H1 (cell line): ENCODE measurements at regions of chr16 and their contacts with region 1.

Region 1: GRCh38 chr16:24499193-24499814 is 40.1 kb upstream of the RBBP6 start:
- DNase-seq: peak; percentile 44 to 77
- H3K4me3 ChIP-seq: no peak overlapping the region
- H3K27ac ChIP-seq: no peak overlapping the region
- H3K4me1 ChIP-seq: peaks cover 0 to 5% (median 4%) of the 10 kb centered on the region in 4 experiments; a peak in 6 of 7 replicates
- H3K27me3 ChIP-seq: no peaks in the 10 kb centered on the region; a peak in 1 of 7 replicates
- CTCF ChIP-seq: peak; percentile 69 to 92 (median 92)
- EP300 ChIP-seq: no peak
- POLR2A ChIP-seq: no peak
- RAD21 ChIP-seq: peak; percentile 98 to 99

Region 2: DNA sequence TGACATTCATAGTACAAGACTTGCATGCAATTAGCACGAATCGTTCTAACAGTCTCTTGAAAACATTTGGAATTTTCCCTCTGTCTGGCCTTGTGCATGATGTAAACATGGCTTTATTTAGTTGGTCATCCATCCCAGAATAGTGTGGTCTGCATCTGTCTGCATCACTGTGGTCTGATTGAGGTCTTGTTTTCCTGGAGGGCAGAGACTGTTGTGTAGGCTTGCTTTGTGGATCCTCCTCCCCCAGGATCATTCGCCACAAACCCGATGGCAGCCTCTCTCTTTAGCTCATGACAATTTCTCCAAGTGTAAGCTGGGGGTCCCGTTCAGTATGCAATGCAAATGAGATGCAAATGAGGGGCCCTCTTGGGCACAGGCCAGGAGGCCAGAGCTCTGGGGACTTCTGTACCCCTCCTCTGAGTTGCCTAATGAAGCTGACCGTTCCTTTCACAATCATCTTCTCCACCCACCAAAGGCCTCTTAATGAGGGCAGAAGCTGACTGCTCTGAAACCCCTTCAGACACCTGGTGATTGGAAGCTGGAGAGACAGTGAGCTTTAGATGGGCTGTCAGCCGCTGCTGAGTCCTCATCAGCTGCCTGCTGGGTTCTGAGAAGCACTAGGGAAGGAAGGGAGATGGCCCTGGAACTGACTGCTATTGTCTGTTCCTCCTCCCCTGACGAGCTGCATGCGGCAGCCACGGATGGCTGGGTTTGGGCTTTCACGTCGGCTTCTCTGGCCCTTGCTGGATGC is 444.4 kb before region 1 on chr16:
- CTCF ChIA-PET with region 1: interaction called, 16 read pairs
- POLR2A ChIA-PET with region 1: no interaction called
- DNase-seq: peak in 1 of 2 experiments; percentile 56
- H3K4me3 ChIP-seq: peak overlapping the region in 1 of 4 experiments; percentile 16; a peak in 2 of 8 replicates
- H3K27ac ChIP-seq: peak overlapping the region; percentile 3; the same call in 1 of the 2 replicates
- H3K4me1 ChIP-seq: peaks cover 5 to 30% (median 12%) of the 10 kb centered on the region in 4 experiments
- H3K27me3 ChIP-seq: no peaks in the 10 kb centered on the region
- CTCF ChIP-seq: no peak
- EP300 ChIP-seq: no peak
- POLR2A ChIP-seq: no peak
- RAD21 ChIP-seq: peak in 1 of 2 experiments; percentile 9; a peak in 1 of 4 replicates

Region 3: GRCh38 chr16:24318670-24319069 is 180.6 kb before region 1 on chr16:
- CTCF ChIA-PET with region 1: interaction called, 12 read pairs
- POLR2A ChIA-PET with region 1: no interaction called
- DNase-seq: peak; percentile 15 to 60
- H3K4me3 ChIP-seq: no peak overlapping the region
- H3K27ac ChIP-seq: no peak overlapping the region
- H3K4me1 ChIP-seq: peaks cover 0 to 10% (median 3%) of the 10 kb centered on the region in 4 experiments; a peak in 3 of 7 replicates
- H3K27me3 ChIP-seq: no peaks in the 10 kb centered on the region
- CTCF ChIP-seq: peak; percentile 67 to 85 (median 75)
- EP300 ChIP-seq: no peak
- POLR2A ChIP-seq: no peak
- RAD21 ChIP-seq: peak; percentile 75 to 81

Region 4: GRCh38 chr16:24336998-24337397 is 162.3 kb before region 1 on chr16:
- CTCF ChIA-PET with region 1: interaction called, 10 read pairs
- POLR2A ChIA-PET with region 1: no interaction called
- DNase-seq: no peak
- H3K4me3 ChIP-seq: no peak overlapping the region
- H3K27ac ChIP-seq: no peak overlapping the region
- H3K4me1 ChIP-seq: no peaks in the 10 kb centered on the region
- H3K27me3 ChIP-seq: no peaks in the 10 kb centered on the region
- CTCF ChIP-seq: peak in 2 of 3 experiments; percentile 17 to 26; a peak in 2 of 4 replicates
- EP300 ChIP-seq: no peak
- POLR2A ChIP-seq: no peak
- RAD21 ChIP-seq: peak; percentile 40 to 60; a peak in 3 of 4 replicates

Region 5: GRCh38 chr16:24482681-24483202 is 16.6 kb before region 1 on chr16:
- CTCF ChIA-PET with region 1: interaction called, 11 read pairs
- POLR2A ChIA-PET with region 1: no interaction called
- DNase-seq: peak in 1 of 2 experiments; percentile 29
- H3K4me3 ChIP-seq: no peak overlapping the region; a peak in 1 of 8 replicates
- H3K27ac ChIP-seq: no peak overlapping the region
- H3K4me1 ChIP-seq: peaks cover 6 to 9% (median 8%) of the 10 kb centered on the region in 4 experiments; a peak in 6 of 7 replicates
- H3K27me3 ChIP-seq: peaks cover 12 to 58% (median 38%) of the 10 kb centered on the region in 4 experiments
- CTCF ChIP-seq: no peak
- EP300 ChIP-seq: peak in 1 of 2 experiments; percentile 46; a peak in 1 of 3 replicates
- POLR2A ChIP-seq: no peak
- RAD21 ChIP-seq: peak; percentile 5 to 25; a peak in 1 of 4 replicates